ENCODE measurements at regions of chr1 and their contacts with region 1.

Region 1: GRCh38 chr1:11838349-11839272 is 9.0 kb downstream of the NPPA start:
- DNase-seq: peak; percentile 83
- H3K4me3 Mint-ChIP-seq: no peak overlapping the region
- H3K27ac Mint-ChIP-seq: no peak overlapping the region
- H3K4me1 Mint-ChIP-seq: no peaks in the 10 kb centered on the region
- H3K27me3 Mint-ChIP-seq: no peaks in the 10 kb centered on the region

Region 2: GRCh38 chr1:11893907-11894251 is 55.3 kb after region 1 on chr1:
- CTCF ChIA-PET with region 1: interaction called, 7 read pairs
- intact Hi-C with region 1: loop called (anchors 1 kb)
- DNase-seq: peak; percentile 82
- H3K4me3 Mint-ChIP-seq: no peak overlapping the region
- H3K27ac Mint-ChIP-seq: no peak overlapping the region
- H3K4me1 Mint-ChIP-seq: no peaks in the 10 kb centered on the region
- H3K27me3 Mint-ChIP-seq: peaks cover 25% of the 10 kb centered on the region

Region 3: DNA sequence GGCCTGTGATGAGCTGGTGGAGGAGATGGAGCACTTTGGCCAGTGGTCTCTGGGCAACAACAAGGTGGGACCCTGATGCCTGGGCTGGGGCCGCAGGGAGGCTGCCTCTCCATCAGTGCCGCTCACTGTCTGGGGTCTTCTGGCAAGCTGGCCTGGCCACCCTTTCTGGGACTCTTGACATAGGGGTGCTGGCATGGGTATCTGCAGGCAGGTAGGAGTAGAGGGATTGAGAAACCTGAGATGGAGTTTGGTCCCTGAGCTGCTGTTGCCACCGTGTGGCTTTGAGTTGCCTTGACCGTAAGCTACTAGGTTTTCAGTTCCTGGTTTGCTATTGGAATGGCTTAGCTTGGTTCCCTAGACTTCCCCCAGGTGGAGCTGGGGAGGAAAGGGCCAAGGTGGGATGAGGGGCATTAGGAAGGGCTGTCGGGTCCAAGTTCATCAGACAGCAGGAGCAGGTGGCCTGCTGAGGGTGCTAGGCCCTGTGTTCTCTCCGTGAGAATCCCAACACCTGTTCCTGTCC is 128.5 kb after region 1 on chr1:
- CTCF ChIA-PET with region 1: interaction called, 4 read pairs
- intact Hi-C with region 1: loop called (anchors 5 kb)
- DNase-seq: no peak
- H3K4me3 Mint-ChIP-seq: no peak overlapping the region
- H3K27ac Mint-ChIP-seq: no peak overlapping the region
- H3K4me1 Mint-ChIP-seq: no peaks in the 10 kb centered on the region
- H3K27me3 Mint-ChIP-seq: no peaks in the 10 kb centered on the region